ENCODE measurements at regions of chr16 and their contacts with region 1.

Region 1: GRCh38 chr16:71564155-71564967 is 12.5 kb downstream of the TAT start:
- DNase-seq: no peak
- ATAC-seq: no peak
- H3K4me3 Mint-ChIP-seq: peak overlapping the region; percentile 81
- H3K27ac Mint-ChIP-seq: peak overlapping the region; percentile 87
- H3K4me1 Mint-ChIP-seq: peaks cover 12% of the 10 kb centered on the region
- H3K27me3 Mint-ChIP-seq: peaks cover 3% of the 10 kb centered on the region

Region 2: GRCh38 chr16:71303938-71304337 is 260.4 kb before region 1 on chr16:
- POLR2A ChIA-PET with region 1: no interaction called
- DNase-seq: no peak
- ATAC-seq: no peak
- H3K4me3 Mint-ChIP-seq: no peak overlapping the region
- H3K27ac Mint-ChIP-seq: no peak overlapping the region
- H3K4me1 Mint-ChIP-seq: no peaks in the 10 kb centered on the region
- H3K27me3 Mint-ChIP-seq: peaks cover 12% of the 10 kb centered on the region

Region 3: GRCh38 chr16:71489122-71489521 is 75.2 kb before region 1 on chr16 and contains the start of gene ZNF19:
- POLR2A ChIA-PET with region 1: no interaction called
- DNase-seq: no peak
- ATAC-seq: no peak
- H3K4me3 Mint-ChIP-seq: no peak within 1 kb of the TSS
- H3K27ac Mint-ChIP-seq: no peak within 1 kb of the TSS
- H3K4me1 Mint-ChIP-seq: peaks cover 3% of the 10 kb centered on the region
- H3K27me3 Mint-ChIP-seq: peaks cover 2% of the 10 kb centered on the region
- total RNA-seq, gene ZNF19: 5.3 to 5.8 TPM

Region 4: GRCh38 chr16:71610936-71611871 is 46.8 kb after region 1 on chr16:
- POLR2A ChIA-PET with region 1: interaction called, 15 read pairs
- DNase-seq: peak; percentile 89
- ATAC-seq: peak; percentile 97
- H3K4me3 Mint-ChIP-seq: no peak overlapping the region
- H3K27ac Mint-ChIP-seq: no peak overlapping the region
- H3K4me1 Mint-ChIP-seq: peaks cover 3% of the 10 kb centered on the region
- H3K27me3 Mint-ChIP-seq: peaks cover 33% of the 10 kb centered on the region